Left cardiac atrium (tissue), 4 donors: ENCODE measurements at regions of chr16 and their contacts with region 1.

Region 1: GRCh38 chr16:58755989-58756649 is 22.0 kb upstream of the GOT2 start:
- DNase-seq: peak; percentile 75
- ATAC-seq: peak; percentile 93 to 96

Region 2: DNA sequence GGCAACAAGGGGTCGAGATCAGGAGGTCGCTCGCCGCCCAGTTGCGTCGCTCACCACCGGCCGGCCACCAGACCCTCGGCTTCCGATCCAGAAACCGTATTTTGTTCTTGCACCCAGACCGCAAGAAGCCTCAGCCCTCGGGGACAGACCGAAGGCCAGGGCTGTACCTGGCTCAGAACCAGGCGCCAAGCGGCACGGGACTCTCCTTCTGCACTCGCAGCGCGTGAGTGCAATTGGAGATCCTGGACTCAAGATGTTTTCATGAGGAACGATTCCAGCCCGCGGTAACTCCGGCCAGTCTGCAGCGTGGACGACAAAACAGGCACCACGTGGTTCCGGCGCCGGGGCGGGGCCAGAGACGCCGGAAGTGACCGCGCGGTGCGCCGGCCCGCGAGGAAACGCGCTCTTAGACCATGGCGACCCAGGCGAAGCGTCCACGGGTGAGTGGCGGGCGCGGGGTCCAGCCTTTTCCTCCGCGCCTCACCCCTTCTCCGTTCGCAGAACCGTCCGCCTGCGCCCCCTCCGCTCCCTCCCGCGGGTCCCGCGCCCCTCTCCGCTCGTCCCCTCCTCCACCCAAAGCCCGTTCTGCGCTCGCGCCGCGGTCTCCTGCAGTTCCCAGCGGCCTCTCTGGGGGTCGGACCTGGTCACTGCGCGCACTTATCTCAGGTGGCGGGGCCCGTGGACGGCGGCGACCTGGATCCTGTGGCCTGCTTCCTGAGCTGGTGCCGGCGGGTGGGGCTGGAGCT is 240.8 kb before region 1 on chr16 and contains the start of gene SETD6:
- intact Hi-C with region 1: no loop called
- DNase-seq: peak; percentile 91
- ATAC-seq: peak; percentile 94 to 95
- total RNA-seq, gene SETD6: 10.7 to 10.8 TPM

Region 3: GRCh38 chr16:58678716-58679115 is 77.4 kb before region 1 on chr16:
- intact Hi-C with region 1: loop called (anchors 1 to 5 kb)
- DNase-seq: no peak
- ATAC-seq: peak; percentile 41 to 79

Region 4: DNA sequence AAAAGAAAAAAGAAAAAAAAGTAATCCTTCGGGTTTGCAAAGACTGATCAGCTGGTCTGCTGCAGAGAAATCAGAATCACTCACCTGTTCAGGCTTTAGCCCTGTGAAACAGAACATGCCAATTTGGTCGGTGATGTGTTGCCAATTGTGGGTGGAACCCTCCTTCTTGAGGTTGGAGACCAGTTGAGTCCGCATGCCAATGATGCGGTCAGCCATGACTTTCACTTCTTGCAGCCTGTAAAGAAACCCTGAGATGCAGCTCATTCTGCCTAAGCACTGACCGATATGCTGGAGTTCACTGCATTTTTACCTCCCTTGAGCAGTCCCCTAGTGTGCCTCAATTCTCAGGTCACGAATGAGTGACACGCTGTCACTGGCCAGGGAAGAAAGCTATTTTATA is 46.8 kb before region 1 on chr16:
- intact Hi-C with region 1: no loop called
- DNase-seq: no peak
- ATAC-seq: no peak

Region 5: GRCh38 chr16:58866935-58867334 is 110.8 kb after region 1 on chr16:
- intact Hi-C with region 1: no loop called
- DNase-seq: no peak
- ATAC-seq: no peak

Region 6: DNA sequence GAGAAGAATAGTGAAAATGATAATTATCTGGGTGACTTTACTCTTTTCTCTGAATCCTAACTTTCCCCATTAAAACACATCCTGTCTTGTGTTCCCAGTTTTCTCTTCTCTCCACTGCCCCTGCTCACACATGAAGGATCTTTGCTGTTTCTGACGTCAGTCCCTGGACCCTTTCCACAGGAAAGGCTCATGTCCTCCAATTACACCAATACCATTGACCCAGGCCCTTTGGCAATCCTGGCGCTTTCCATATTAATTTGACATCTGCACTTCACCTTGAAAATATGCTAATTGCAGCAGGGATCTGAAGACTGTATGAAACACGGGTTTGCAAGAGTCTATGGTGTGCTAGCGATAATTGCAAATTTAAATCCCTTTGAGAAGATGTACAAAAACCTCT is 148.2 kb after region 1 on chr16:
- intact Hi-C with region 1: no loop called
- DNase-seq: no peak
- ATAC-seq: no peak